ENCODE measurements at regions of chr9 and their contacts with region 1.

Region 1: DNA sequence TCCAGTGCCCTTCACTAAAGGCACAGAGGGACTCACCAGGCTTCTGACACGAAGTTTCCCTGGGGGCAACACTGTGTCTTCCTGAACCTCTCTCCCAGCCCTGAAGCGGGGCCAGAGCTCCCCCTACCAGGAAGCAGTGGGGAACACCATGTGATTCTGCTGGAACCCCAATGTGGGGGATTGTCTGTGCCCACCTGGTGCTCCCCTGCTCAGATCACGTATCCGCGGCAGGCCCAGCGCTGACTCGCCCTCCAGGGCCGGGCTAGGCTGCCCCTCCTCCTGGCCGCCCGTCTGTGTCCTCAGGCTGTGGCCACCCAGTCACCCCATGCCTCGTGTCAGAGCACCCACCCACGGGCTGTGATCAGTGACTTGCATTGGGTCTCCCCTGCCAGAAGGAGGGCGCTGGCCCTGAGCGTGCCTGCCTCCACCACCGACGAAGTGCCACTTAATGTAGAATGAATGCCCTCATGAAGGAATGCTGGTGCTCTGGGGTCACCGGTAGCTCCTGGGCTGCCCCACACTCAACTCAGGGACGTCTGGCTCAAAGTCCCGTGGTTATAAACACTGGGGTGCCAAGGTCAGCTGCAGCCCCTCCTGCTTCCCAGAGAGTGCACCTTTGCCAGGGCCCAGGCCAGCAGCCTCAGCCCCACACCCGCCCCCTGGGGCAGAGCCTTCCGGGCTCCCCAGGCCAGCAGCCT is 22.1 kb downstream of the SARDH start:
- DNase-seq: no peak
- H3K4me3 ChIP-seq: no peak overlapping the region
- H3K27ac ChIP-seq: peak overlapping the region in 1 of 2 donors; percentile 58
- H3K4me1 ChIP-seq: no peaks in the 10 kb centered on the region
- H3K27me3 ChIP-seq: peaks cover 0 to 3% of the 10 kb centered on the region in 2 donors
- CTCF ChIP-seq: peak in 1 of 3 donors; percentile 10
- POLR2A ChIP-seq: no peak

Region 2: GRCh38 chr9:133532937-133533668 is 182.9 kb before region 1 on chr9:
- intact Hi-C with region 1: loop called (anchors 10 kb)
- DNase-seq: no peak
- H3K4me3 ChIP-seq: no peak overlapping the region
- H3K27ac ChIP-seq: no peak overlapping the region
- H3K4me1 ChIP-seq: peaks cover 3 to 9% of the 10 kb centered on the region in 2 donors
- H3K27me3 ChIP-seq: peaks cover 0 to 52% of the 10 kb centered on the region in 2 donors
- CTCF ChIP-seq: peak; percentile 35 to 62 (median 42)
- POLR2A ChIP-seq: no peak

Measured in breast epithelium (tissue), 4 donors.